Heart right ventricle (tissue), 16 donors: ENCODE measurements at regions of chr11 and their contacts with region 1.

Region 1: GRCh38 chr11:122505304-122506006 is 150.1 kb upstream of the UBASH3B start:
- DNase-seq: peak; percentile 74 to 83
- ATAC-seq: peak; percentile 96 to 100 (median 97)
- H3K4me3 ChIP-seq: no peak overlapping the region
- H3K27ac ChIP-seq: no peak overlapping the region
- H3K4me1 ChIP-seq: peaks cover 0 to 8% (median 5%) of the 10 kb centered on the region in 9 donors
- H3K27me3 ChIP-seq: peaks cover 0 to 7% (median 0%) of the 10 kb centered on the region in 7 donors
- CTCF ChIP-seq: peak; percentile 64 to 95 (median 85)

Region 2: GRCh38 chr11:122108192-122108799 is 397.2 kb before region 1 on chr11:
- intact Hi-C with region 1: loop called in 4 of 10 experiments (anchors 5 to 10 kb)
- DNase-seq: no peak
- ATAC-seq: no peak
- H3K4me3 ChIP-seq: no peak overlapping the region
- H3K27ac ChIP-seq: peak overlapping the region in 9 of 10 donors; percentile 12 to 70 (median 61)
- H3K4me1 ChIP-seq: peaks cover 0 to 30% (median 10%) of the 10 kb centered on the region in 9 donors
- H3K27me3 ChIP-seq: no peaks in the 10 kb centered on the region
- CTCF ChIP-seq: peak; percentile 20 to 57 (median 50)

Region 3: DNA sequence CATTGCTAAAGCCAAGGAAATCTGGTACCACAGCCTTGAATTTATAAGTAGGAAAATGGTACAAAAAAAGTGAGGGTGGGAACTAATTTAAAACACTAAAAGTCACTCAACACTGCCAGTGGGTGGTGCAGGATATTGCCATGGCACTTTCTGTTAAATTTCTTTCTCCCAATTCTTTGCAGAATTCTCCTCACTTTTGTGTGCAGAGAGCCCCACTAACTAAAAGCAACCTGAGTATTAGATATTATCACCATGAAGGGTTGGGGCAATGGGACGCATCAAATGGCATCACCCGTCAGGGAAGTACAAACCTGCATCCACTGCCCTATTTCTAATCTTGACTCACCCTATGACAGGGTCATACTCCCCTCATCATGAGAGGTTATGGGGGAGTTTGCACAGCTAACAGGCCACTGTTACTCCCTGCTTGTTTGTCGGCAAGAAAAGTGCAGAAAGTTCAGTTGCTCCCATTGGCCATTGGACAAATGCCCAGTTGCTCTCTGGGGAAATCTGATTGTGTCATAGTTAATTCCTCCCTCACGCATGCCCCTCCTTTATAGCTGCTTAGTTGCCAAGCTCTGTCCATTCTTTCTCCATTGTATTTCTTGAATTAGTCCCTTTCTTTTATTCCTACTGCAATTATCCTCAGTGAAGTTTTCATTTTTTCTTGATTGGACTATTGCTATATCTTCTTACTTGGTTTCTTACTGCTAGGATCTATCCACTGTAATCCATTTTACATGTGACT is 295.7 kb before region 1 on chr11:
- intact Hi-C with region 1: loop called in 5 of 10 experiments (anchors 2 to 5 kb)
- DNase-seq: peak in 1 of 2 donors; percentile 90
- ATAC-seq: peak; percentile 67 to 81 (median 74)
- H3K4me3 ChIP-seq: no peak overlapping the region
- H3K27ac ChIP-seq: peak overlapping the region in 7 of 10 donors; percentile 6 to 64 (median 40)
- H3K4me1 ChIP-seq: peaks cover 0 to 51% (median 40%) of the 10 kb centered on the region in 9 donors
- H3K27me3 ChIP-seq: no peaks in the 10 kb centered on the region
- CTCF ChIP-seq: no peak

Region 4: DNA sequence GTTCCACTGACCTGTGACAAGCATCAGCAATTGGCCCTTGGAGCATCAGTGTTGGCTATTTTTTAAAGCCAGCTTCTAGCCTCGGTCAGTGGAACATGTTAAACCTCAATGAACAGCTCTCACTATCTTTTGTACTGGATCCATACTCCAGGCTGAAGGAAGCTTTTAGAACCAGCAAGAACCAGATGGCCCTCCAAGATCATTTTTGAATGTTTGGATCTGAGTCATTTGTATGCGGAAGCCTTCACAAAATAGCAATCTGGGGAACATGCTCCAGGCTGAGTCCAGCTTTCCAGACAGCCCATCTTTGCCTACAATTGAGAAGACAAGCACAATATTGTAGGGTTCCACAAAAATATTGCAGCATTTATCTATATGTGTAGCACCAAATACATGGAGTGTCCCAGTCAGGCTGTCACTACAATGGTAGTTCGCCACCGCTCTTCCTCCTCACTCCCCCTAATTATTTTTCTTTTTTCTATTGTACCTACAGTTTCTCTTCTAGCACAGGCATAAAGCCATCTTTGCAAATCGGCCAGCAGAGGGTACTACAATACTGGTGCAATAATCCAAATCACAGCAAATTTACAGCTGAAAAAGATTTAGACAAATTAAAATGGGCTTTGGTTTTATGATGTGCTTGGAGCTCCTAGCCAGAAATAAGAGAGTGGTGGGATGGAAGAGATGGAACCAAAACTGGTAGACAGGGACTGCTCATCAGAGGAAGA is 212.0 kb before region 1 on chr11:
- intact Hi-C with region 1: loop called (anchors 2 to 10 kb)
- DNase-seq: no peak
- ATAC-seq: peak in 6 of 8 donors; percentile 33 to 74 (median 49)
- H3K4me3 ChIP-seq: no peak overlapping the region
- H3K27ac ChIP-seq: peak overlapping the region in 1 of 10 donors; percentile 30
- H3K4me1 ChIP-seq: peaks cover 0 to 4% (median 0%) of the 10 kb centered on the region in 9 donors
- H3K27me3 ChIP-seq: no peaks in the 10 kb centered on the region
- CTCF ChIP-seq: peak; percentile 18 to 57 (median 45)

Region 5: GRCh38 chr11:122523846-122524805 is 18.7 kb after region 1 on chr11:
- intact Hi-C with region 1: no loop called
- DNase-seq: peak in 1 of 2 donors; percentile 22
- ATAC-seq: peak; percentile 61 to 96 (median 77)
- H3K4me3 ChIP-seq: no peak overlapping the region
- H3K27ac ChIP-seq: peak overlapping the region in 6 of 10 donors; percentile 3 to 63 (median 48)
- H3K4me1 ChIP-seq: peaks cover 0 to 25% (median 19%) of the 10 kb centered on the region in 9 donors
- H3K27me3 ChIP-seq: no peaks in the 10 kb centered on the region
- CTCF ChIP-seq: no peak